Common myeloid progenitor, CD34-positive (primary cell): ENCODE measurements at regions of chr1 and their contacts with region 1.

Region 1: GRCh38 chr1:70910013-70910412 is 137.6 kb downstream of the PTGER3 start:
- DNase-seq: peak in 2 of 3 donors; percentile 28 to 49
- H3K4me3 ChIP-seq: no peak overlapping the region
- H3K27ac ChIP-seq: peak overlapping the region in 1 of 2 experiments; percentile 14
- H3K4me1 ChIP-seq: peaks cover 9 to 33% (median 20%) of the 10 kb centered on the region in 4 experiments
- H3K27me3 ChIP-seq: peaks cover 0 to 2% (median 0%) of the 10 kb centered on the region in 5 experiments

Region 2: GRCh38 chr1:70874111-70874510 is 35.9 kb before region 1 on chr1:
- CTCF ChIA-PET with region 1: no interaction called
- POLR2A ChIA-PET with region 1: no interaction called
- DNase-seq: peak in 2 of 3 donors; percentile 40 to 54
- H3K4me3 ChIP-seq: no peak overlapping the region
- H3K27ac ChIP-seq: no peak overlapping the region
- H3K4me1 ChIP-seq: peaks cover 0 to 17% (median 2%) of the 10 kb centered on the region in 4 experiments
- H3K27me3 ChIP-seq: peaks cover 0 to 10% (median 0%) of the 10 kb centered on the region in 5 experiments

Region 3: GRCh38 chr1:70896224-70896623 is 13.8 kb before region 1 on chr1:
- CTCF ChIA-PET with region 1: interaction called, 21 read pairs
- POLR2A ChIA-PET with region 1: no interaction called
- DNase-seq: peak in 2 of 3 donors; percentile 13 to 14
- H3K4me3 ChIP-seq: no peak overlapping the region
- H3K27ac ChIP-seq: no peak overlapping the region
- H3K4me1 ChIP-seq: no peaks in the 10 kb centered on the region
- H3K27me3 ChIP-seq: peaks cover 0 to 2% (median 0%) of the 10 kb centered on the region in 5 experiments

Region 4: DNA sequence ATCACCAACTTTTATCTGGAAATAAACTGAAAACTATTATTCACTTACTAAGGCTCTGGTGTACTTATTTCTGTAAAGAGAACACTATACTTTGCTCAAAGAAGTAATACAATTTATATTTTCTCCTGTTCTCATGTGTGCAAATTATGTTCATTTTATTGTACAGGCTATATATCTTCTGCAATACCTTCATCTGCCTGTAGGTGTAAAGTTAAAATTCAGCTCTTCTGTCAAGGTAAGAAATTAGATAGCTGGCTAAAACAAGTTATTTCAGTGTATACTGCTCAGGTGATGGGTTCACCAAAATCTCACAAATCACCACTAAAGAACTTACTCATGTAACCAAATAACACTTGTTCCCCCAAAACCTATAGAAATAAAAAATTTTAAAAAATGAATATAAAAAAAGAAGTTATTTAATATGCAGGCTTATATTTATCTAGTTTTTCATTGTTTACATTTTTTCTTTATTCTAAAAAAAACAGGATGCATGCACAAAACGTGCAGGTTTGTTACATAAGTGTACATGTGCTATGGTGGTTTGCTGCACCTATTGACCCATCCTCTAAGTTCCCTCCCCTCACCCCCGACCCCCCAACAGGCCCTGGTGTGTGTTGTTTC is 56.1 kb after region 1 on chr1:
- CTCF ChIA-PET with region 1: no interaction called
- POLR2A ChIA-PET with region 1: no interaction called
- DNase-seq: peak in 2 of 3 donors; percentile 39 to 43
- H3K4me3 ChIP-seq: no peak overlapping the region
- H3K27ac ChIP-seq: no peak overlapping the region
- H3K4me1 ChIP-seq: peaks cover 0 to 1% (median 0%) of the 10 kb centered on the region in 4 experiments
- H3K27me3 ChIP-seq: no peaks in the 10 kb centered on the region